ENCODE measurements at regions of chr2 and their contacts with region 1.

Region 1: GRCh38 chr2:168118733-168119514 is 128.5 kb downstream of the STK39 start:
- DNase-seq: peak; percentile 54
- H3K4me3 ChIP-seq: no peak overlapping the region
- H3K27ac ChIP-seq: no peak overlapping the region
- H3K27me3 ChIP-seq: no peaks in the 10 kb centered on the region
- CTCF ChIP-seq: peak; percentile 70

Region 2: DNA sequence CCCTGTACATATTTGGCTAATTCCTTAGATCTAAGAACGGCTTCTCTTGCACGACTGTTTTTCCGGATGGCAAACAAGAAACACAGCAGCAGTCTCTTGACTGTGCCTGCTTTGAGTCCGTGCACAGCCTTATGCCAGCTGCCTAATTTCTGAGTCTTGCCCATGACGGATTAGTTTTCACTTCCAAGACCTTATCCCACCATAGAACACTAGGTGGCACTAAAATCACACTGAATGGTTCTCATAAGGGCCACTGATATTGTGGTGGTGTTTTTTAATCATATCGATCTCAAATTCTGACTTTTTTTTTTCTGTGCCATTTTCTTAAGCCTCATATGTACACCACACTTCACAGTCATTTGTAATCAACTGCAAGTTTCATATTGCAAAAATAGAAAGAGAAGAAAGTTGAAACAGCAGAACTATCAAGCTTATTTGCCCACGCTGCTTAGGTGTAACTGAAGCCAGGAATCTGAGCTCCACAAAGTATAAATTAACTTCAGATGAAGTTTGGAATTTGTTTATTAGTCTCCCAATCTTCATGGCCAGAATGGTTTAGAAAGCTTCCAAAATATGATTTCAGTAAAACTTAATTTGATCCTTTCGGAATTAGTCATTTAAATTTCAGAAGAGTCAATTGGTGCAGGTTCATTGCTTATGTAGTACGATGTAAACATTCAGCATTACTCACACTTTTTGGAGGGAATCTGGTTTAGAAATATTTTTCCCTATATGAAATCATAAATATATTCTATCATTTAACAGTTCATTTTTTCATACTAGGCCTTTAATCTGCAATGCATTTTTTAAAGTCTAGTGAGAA is 1579.4 kb before region 1 on chr2:
- CTCF ChIA-PET with region 1: interaction called, 34 read pairs
- POLR2A ChIA-PET with region 1: no interaction called
- DNase-seq: peak; percentile 65
- H3K4me3 ChIP-seq: peak overlapping the region; percentile 43
- H3K27ac ChIP-seq: no peak overlapping the region
- H3K27me3 ChIP-seq: no peaks in the 10 kb centered on the region
- CTCF ChIP-seq: peak; percentile 85

Region 3: GRCh38 chr2:167298017-167298416 is 820.9 kb before region 1 on chr2:
- CTCF ChIA-PET with region 1: interaction called, 15 read pairs
- POLR2A ChIA-PET with region 1: no interaction called
- DNase-seq: no peak
- H3K4me3 ChIP-seq: no peak overlapping the region
- H3K27ac ChIP-seq: no peak overlapping the region
- H3K27me3 ChIP-seq: no peaks in the 10 kb centered on the region
- CTCF ChIP-seq: no peak

Region 4: GRCh38 chr2:167856190-167856589 is 262.7 kb before region 1 on chr2:
- CTCF ChIA-PET with region 1: interaction called, 11 read pairs
- POLR2A ChIA-PET with region 1: no interaction called
- DNase-seq: no peak
- H3K4me3 ChIP-seq: no peak overlapping the region
- H3K27ac ChIP-seq: no peak overlapping the region
- H3K27me3 ChIP-seq: no peaks in the 10 kb centered on the region
- CTCF ChIP-seq: no peak

Region 5: DNA sequence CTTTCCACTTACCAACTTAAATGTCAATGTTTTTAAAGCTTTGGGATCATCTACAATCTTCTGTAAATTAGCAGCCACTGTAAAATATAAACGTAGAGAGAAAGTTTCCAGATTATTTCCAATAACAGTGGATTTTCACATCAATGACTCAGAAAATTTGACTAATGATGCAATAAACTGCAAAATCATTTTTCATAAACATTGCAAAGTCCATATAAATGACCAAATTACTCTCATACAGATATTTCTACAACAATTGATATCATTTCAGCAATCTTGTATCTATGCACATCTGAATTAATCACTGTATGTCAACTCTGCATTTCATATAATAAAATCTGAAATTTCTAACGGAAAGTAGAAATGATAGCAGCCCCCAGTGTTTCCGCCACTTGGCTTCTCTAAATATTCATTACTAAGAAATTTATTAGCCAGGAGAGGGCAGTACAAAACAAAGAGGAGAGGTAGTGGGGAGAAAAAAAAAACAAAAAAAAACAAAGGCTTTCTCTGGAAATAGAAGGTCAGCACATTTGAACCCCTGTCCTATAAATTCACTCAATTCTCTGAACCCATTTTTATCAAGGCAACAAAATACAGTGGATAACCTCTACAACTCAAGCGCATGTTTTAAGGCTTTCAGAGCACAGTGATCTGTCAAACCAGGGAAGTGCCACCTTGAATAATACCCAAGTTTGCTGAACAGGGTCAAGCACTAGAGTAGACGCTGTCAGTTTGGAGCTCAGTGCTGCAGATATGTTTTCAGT is 154.1 kb before region 1 on chr2:
- CTCF ChIA-PET with region 1: interaction called, 267 read pairs
- POLR2A ChIA-PET with region 1: no interaction called
- DNase-seq: no peak
- H3K4me3 ChIP-seq: no peak overlapping the region
- H3K27ac ChIP-seq: no peak overlapping the region
- H3K27me3 ChIP-seq: no peaks in the 10 kb centered on the region
- CTCF ChIP-seq: peak; percentile 41

Region 6: DNA sequence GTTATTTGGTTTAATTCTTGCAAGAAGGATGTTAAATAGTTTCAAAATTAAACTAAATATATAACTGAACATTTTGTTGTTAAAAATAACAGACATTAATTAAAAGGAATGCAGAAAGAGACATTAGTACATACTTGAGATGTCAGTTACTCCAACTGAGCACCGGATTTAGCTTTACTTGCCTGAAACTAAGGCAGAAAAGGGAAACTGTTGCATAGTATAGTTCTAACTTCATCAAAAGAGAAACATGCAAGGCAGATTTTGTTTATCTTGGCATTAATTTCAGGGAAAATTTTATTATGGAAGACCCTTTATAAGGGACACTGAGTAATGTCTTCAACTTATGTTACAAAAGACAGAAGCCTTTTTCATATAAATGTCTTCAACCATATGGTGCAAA is 89.9 kb before region 1 on chr2:
- CTCF ChIA-PET with region 1: no interaction called
- POLR2A ChIA-PET with region 1: no interaction called
- DNase-seq: no peak
- H3K4me3 ChIP-seq: no peak overlapping the region
- H3K27ac ChIP-seq: no peak overlapping the region
- H3K27me3 ChIP-seq: no peaks in the 10 kb centered on the region
- CTCF ChIP-seq: no peak

Region 7: DNA sequence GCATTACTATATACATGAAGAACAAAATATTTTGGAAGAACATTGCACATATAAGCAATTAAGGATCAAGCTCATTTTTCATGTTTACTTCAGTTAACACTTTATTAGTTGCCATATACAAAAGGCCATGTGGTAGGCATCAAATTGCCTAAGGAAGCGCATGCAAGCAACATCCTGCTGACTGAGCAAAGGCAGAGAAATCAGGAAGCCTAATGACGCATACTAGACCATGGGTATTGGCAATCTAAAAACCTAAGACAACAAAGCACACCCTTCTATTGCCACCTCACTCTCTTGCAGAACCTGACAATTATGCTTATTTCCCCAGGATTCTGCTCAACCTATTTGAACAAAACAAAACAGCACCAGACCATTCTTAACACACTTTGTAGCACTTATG is 43.5 kb before region 1 on chr2:
- CTCF ChIA-PET with region 1: interaction called, 36 read pairs
- POLR2A ChIA-PET with region 1: no interaction called
- DNase-seq: no peak
- H3K4me3 ChIP-seq: no peak overlapping the region
- H3K27ac ChIP-seq: no peak overlapping the region
- H3K27me3 ChIP-seq: no peaks in the 10 kb centered on the region
- CTCF ChIP-seq: no peak

Region 8: DNA sequence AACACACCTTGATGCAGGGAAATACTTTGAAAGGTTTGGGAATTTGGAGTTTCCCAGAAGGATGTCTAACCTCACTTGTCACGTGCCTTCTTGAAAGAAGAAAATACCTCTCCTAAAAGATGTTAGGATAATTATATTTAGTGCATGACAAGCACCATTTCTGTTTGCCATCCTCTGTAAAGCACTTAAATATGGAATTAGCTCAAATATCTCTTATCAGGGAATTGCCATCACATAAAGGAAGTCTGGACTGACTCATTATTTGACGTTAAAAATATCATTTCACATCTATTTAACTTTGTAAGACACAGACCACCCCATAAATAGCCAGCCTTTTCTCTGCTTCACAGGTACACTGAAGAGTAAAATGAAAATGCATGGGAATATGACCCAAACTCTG is 11.6 kb before region 1 on chr2:
- CTCF ChIA-PET with region 1: interaction called, 143 read pairs
- POLR2A ChIA-PET with region 1: no interaction called
- DNase-seq: no peak
- H3K4me3 ChIP-seq: no peak overlapping the region
- H3K27ac ChIP-seq: no peak overlapping the region
- H3K27me3 ChIP-seq: no peaks in the 10 kb centered on the region
- CTCF ChIP-seq: no peak